ENCODE measurements at regions of chr22 and their contacts with region 1.

Region 1: DNA sequence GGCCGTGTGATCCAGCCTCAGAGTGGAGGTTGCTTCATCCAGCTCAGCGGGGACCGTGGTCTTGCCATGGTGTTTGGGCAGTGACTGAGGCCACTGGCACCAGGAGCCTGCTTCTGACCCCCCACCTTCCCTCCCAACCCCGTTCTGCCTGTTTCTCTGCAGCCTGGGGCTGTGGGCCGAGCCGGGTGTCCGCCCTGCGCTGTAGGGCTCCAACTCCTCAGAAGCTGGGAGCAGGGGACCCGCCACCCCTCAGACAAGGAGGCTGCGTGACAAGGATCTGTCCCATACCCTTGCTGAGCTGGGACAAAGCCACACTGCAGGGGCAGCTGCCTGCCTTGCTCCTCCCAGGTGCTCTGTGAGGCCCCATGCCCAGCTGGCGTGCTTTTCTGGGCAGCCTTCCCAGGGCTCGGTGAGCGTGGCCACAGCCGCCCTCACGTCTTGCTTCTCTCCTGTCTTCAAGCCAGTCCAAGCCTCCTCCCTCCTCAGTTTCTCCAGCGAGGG is 11.7 kb upstream of the ARFGAP3 start:
- DNase-seq: no peak
- H3K4me3 ChIP-seq: no peak overlapping the region
- H3K27ac ChIP-seq: no peak overlapping the region
- H3K4me1 ChIP-seq: peaks cover 0 to 12% (median 8%) of the 10 kb centered on the region in 4 experiments
- H3K27me3 ChIP-seq: no peaks in the 10 kb centered on the region

Region 2: GRCh38 chr22:42856865-42857704 is 11.7 kb before region 1 on chr22 and contains the start of gene ARFGAP3:
- CTCF ChIA-PET with region 1: interaction called, 16 read pairs
- POLR2A ChIA-PET with region 1: interaction called, 3 read pairs
- DNase-seq: peak; percentile 91 to 95 (median 95)
- H3K4me3 ChIP-seq: peak within 1 kb of the TSS; percentile 67 to 90 (median 83)
- H3K27ac ChIP-seq: peak within 1 kb of the TSS; percentile 54 to 84
- H3K4me1 ChIP-seq: peaks cover 4 to 27% (median 18%) of the 10 kb centered on the region in 4 experiments
- H3K27me3 ChIP-seq: no peaks in the 10 kb centered on the region

Region 3: GRCh38 chr22:42881982-42882656 is 13.3 kb after region 1 on chr22:
- CTCF ChIA-PET with region 1: interaction called, 13 read pairs
- POLR2A ChIA-PET with region 1: interaction called, 6 read pairs
- DNase-seq: no peak
- H3K4me3 ChIP-seq: no peak overlapping the region
- H3K27ac ChIP-seq: no peak overlapping the region
- H3K4me1 ChIP-seq: peaks cover 0 to 2% (median 0%) of the 10 kb centered on the region in 4 experiments
- H3K27me3 ChIP-seq: no peaks in the 10 kb centered on the region

Region 4: DNA sequence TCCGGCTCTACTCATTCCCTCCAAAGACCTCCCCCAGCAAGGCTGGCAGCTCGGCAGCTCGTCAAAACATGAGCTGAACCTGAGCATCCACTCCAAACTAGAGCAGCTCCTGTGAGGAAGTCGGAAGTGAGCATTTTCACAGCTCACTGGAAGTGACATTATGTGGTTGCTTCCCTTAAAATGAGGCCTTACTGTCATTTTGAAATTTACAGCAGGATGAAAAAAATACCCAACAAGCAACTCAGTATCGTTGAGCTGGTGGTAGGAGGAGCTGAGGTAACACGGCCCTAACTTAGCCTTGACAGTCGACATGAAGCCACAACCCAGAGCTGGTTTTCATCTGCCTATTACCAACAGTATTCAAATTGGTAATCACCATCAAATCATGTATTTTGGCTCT is 26.3 kb after region 1 on chr22:
- CTCF ChIA-PET with region 1: interaction called, 18 read pairs
- POLR2A ChIA-PET with region 1: interaction called, 3 read pairs
- DNase-seq: peak; percentile 63 to 92 (median 88)
- H3K4me3 ChIP-seq: peak overlapping the region in 3 of 7 experiments; percentile 1 to 6 (median 2)
- H3K27ac ChIP-seq: peak overlapping the region in 1 of 2 experiments; percentile 35
- H3K4me1 ChIP-seq: peaks cover 22 to 75% (median 57%) of the 10 kb centered on the region in 4 experiments
- H3K27me3 ChIP-seq: no peaks in the 10 kb centered on the region

Region 5: GRCh38 chr22:42901790-42902508 is 33.1 kb after region 1 on chr22:
- CTCF ChIA-PET with region 1: interaction called, 28 read pairs
- POLR2A ChIA-PET with region 1: no interaction called
- DNase-seq: peak in 2 of 3 donors; percentile 52 to 55
- H3K4me3 ChIP-seq: no peak overlapping the region
- H3K27ac ChIP-seq: no peak overlapping the region
- H3K4me1 ChIP-seq: peaks cover 0 to 21% (median 10%) of the 10 kb centered on the region in 4 experiments
- H3K27me3 ChIP-seq: no peaks in the 10 kb centered on the region

Measured in common myeloid progenitor, CD34-positive (primary cell).